AG04449 (cell line): ENCODE measurements at regions of chr22 and their contacts with region 1.

Region 1: DNA sequence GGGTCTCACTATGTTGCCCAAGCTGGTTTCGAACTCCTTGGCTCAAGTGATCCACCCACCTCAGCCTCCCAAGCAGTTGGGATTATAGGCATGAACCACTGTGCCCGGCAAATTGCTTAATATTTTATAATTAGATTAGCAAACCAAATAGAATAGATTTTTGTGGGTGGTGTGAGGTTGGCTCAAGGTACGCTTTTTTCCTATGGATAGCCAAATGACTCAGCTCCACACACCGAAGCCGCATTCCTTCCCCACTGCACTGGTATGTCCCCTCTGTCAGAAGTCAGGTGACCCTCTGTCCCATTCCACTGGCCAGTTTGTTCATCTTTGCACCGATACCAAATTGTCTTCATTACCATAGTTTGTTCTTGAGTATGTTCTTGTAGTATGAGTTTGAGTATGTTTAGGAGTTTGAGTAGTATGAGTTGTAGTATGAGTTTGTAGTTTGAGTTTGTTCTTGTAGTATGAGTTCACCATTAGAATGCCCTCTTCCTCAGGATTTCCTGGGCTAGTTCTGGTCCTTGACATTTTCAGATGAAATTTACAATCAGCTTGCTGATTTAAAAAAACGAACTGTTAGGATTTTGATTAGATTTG is 19.4 kb downstream of the SUSD2 start:
- DNase-seq: peak; percentile 38
- H3K4me3 ChIP-seq: no peak overlapping the region
- CTCF ChIP-seq: no peak

Region 2: GRCh38 chr22:24189249-24190158 is 11.2 kb before region 1 on chr22:
- CTCF ChIA-PET with region 1: interaction called, 64 read pairs
- POLR2A ChIA-PET with region 1: no interaction called
- DNase-seq: no peak
- H3K4me3 ChIP-seq: no peak overlapping the region
- CTCF ChIP-seq: peak; percentile 97

Region 3: GRCh38 chr22:24214467-24215285 is 14.0 kb after region 1 on chr22:
- CTCF ChIA-PET with region 1: no interaction called
- POLR2A ChIA-PET with region 1: no interaction called
- DNase-seq: no peak
- H3K4me3 ChIP-seq: no peak overlapping the region
- CTCF ChIP-seq: no peak

Region 4: GRCh38 chr22:24305260-24305692 is 104.6 kb after region 1 on chr22:
- CTCF ChIA-PET with region 1: no interaction called
- POLR2A ChIA-PET with region 1: no interaction called
- DNase-seq: no peak
- H3K4me3 ChIP-seq: no peak overlapping the region
- CTCF ChIP-seq: no peak